Activated CD8-positive, alpha-beta T cell treated with anti-CD3 and anti-CD28 coated beads, Interleukin-2, amount 10 ng/mL, durations not matched to agents 7 days and 5 days (primary cell): ENCODE measurements at regions of chr3 and their contacts with region 1.

Region 1: DNA sequence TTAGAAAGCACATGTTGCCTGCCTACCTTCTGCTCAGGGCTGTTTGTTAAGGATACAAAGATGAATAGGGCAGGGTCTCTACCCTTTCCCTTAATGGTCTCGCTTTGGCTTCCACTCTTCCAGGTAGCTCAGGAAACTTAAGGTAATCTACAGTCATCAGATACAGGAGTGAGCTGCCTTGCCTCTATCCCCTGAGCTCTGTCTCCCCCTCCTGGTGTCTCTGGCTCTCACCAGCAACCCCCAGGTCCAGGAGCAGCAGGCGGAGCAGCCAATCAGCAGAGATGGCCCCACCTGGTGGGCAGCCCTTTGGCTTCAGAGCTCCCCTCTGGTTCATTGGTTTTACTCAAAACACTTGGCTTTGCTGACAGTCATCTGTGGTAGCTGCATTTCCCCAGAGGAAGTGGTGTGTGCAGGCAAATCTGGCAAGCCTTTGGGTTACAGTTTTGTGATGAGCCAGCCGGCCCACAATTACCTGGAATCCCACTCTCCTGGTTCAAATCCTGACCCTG is 8.5 kb upstream of the CX3CR1 start:
- DNase-seq: peak; percentile 91
- ATAC-seq: peak; percentile 96
- H3K4me3 Mint-ChIP-seq: no peak overlapping the region
- H3K27ac Mint-ChIP-seq: peak overlapping the region; percentile 0
- H3K4me1 Mint-ChIP-seq: peaks cover 46% of the 10 kb centered on the region
- H3K27me3 Mint-ChIP-seq: peaks cover 3% of the 10 kb centered on the region

Region 2: GRCh38 chr3:39096775-39097174 is 191.6 kb before region 1 on chr3:
- CTCF ChIA-PET with region 1: interaction called, 59 read pairs
- POLR2A ChIA-PET with region 1: no interaction called
- DNase-seq: no peak
- ATAC-seq: no peak
- H3K4me3 Mint-ChIP-seq: no peak overlapping the region
- H3K27ac Mint-ChIP-seq: no peak overlapping the region
- H3K4me1 Mint-ChIP-seq: peaks cover 4% of the 10 kb centered on the region
- H3K27me3 Mint-ChIP-seq: no peaks in the 10 kb centered on the region

Region 3: DNA sequence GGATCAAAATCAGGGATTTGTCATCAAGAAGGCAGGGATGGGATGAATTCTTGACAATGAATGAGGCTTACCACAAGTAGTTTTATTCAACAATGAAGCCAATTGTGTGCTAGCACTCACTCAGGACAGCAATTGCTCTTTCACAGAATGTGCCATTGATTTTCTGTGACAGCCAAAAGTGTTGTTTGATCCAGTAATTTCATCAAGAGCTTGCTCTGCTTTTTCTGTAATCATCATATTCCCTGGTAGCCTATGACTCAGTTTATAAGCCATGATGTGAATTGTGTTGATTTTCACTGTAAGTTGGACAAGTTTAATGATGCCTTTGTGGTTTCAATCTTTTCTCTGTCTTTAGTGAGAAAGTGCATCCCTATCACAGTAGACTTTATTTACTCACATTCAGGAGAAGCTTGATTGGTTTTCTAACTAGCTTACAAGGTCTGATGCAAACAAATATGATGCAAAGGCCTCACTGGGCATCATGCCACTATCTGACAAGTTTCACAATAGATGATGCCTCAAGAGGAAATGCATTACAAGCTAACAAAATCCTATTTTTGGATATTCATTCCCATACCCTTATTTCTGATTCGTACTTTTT is 121.3 kb before region 1 on chr3:
- CTCF ChIA-PET with region 1: interaction called, 14 read pairs
- POLR2A ChIA-PET with region 1: no interaction called
- DNase-seq: no peak
- ATAC-seq: no peak
- H3K4me3 Mint-ChIP-seq: no peak overlapping the region
- H3K27ac Mint-ChIP-seq: no peak overlapping the region
- H3K4me1 Mint-ChIP-seq: peaks cover 18% of the 10 kb centered on the region
- H3K27me3 Mint-ChIP-seq: peaks cover 2% of the 10 kb centered on the region

Region 4: GRCh38 chr3:39216176-39216790 is 72.1 kb before region 1 on chr3:
- CTCF ChIA-PET with region 1: interaction called, 24 read pairs
- POLR2A ChIA-PET with region 1: no interaction called
- DNase-seq: no peak
- ATAC-seq: no peak
- H3K4me3 Mint-ChIP-seq: no peak overlapping the region
- H3K27ac Mint-ChIP-seq: no peak overlapping the region
- H3K4me1 Mint-ChIP-seq: peaks cover 22% of the 10 kb centered on the region
- H3K27me3 Mint-ChIP-seq: peaks cover 38% of the 10 kb centered on the region

Region 5: GRCh38 chr3:39267631-39268548 is 20.5 kb before region 1 on chr3:
- CTCF ChIA-PET with region 1: interaction called, 242 read pairs
- POLR2A ChIA-PET with region 1: no interaction called
- DNase-seq: peak; percentile 84
- ATAC-seq: peak; percentile 97
- H3K4me3 Mint-ChIP-seq: peak overlapping the region; percentile 54
- H3K27ac Mint-ChIP-seq: peak overlapping the region; percentile 89
- H3K4me1 Mint-ChIP-seq: peaks cover 36% of the 10 kb centered on the region
- H3K27me3 Mint-ChIP-seq: peaks cover 18% of the 10 kb centered on the region

Region 6: GRCh38 chr3:39346785-39347585 is 58.6 kb after region 1 on chr3:
- CTCF ChIA-PET with region 1: interaction called, 40 read pairs
- POLR2A ChIA-PET with region 1: no interaction called
- DNase-seq: no peak
- ATAC-seq: no peak
- H3K4me3 Mint-ChIP-seq: no peak overlapping the region
- H3K27ac Mint-ChIP-seq: peak overlapping the region; percentile 57
- H3K4me1 Mint-ChIP-seq: peaks cover 42% of the 10 kb centered on the region
- H3K27me3 Mint-ChIP-seq: no peaks in the 10 kb centered on the region

Region 7: GRCh38 chr3:39406368-39407258 is 118.3 kb after region 1 on chr3 and contains the start of gene RPSA:
- CTCF ChIA-PET with region 1: interaction called, 25 read pairs
- POLR2A ChIA-PET with region 1: interaction called, 5 read pairs
- DNase-seq: peak; percentile 98
- ATAC-seq: peak; percentile 97
- H3K4me3 Mint-ChIP-seq: peak within 1 kb of the TSS; percentile 85
- H3K27ac Mint-ChIP-seq: peak within 1 kb of the TSS; percentile 96
- H3K4me1 Mint-ChIP-seq: peaks cover 53% of the 10 kb centered on the region
- H3K27me3 Mint-ChIP-seq: no peaks in the 10 kb centered on the region
- total RNA-seq, gene RPSA: 1,654 to 1,730 TPM

Region 8: GRCh38 chr3:39665441-39665840 is 377.1 kb after region 1 on chr3:
- CTCF ChIA-PET with region 1: no interaction called
- POLR2A ChIA-PET with region 1: no interaction called
- DNase-seq: no peak
- ATAC-seq: no peak
- H3K4me3 Mint-ChIP-seq: no peak overlapping the region
- H3K27ac Mint-ChIP-seq: no peak overlapping the region
- H3K4me1 Mint-ChIP-seq: no peaks in the 10 kb centered on the region
- H3K27me3 Mint-ChIP-seq: peaks cover 6% of the 10 kb centered on the region